ENCODE measurements at regions of chr9 and their contacts with region 1.

Region 1: DNA sequence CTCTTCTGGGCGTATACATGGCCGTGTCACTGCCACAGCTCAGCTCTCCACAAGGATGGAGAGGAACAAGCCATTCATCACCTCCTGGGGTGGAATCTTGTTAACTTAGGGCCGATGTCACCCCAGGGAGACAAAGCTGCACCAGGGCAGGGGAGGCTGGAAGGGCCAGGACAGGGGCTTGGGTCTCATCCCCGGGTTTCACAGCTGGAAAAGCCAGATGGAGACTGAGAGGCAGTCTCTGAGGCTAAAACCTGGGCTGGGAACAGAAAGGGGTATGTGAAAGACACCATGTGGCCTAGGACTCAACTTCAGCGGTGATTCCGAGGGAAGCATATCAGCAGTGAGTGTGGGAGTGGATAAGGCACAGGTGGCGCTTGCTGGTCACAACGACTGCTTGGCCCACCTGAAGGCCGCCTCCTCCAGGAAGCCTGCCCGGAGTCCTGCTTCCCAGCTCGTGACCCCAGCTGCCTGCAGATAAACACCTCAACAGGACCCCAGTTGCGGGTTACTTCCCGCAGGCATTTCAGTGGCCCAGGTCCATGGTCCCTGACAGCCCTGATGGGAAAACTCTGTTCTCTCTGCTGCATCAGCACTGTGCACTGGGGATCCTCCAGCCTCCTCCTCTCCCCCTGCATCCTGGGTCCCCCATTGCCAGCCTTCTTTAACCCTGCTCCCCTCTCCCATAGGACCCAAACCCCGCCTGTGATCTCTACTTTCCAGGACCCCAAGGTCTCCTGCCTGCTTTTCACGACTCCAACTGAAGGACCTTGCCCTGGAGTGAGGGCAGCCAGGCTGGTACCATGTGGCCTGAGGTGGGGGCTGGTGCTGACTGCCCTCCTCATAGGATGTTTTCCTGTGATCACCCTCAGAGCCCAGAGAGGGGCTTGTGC is 51.7 kb upstream of the FCN1 start:
- DNase-seq: no peak
- CTCF ChIP-seq: no peak

Region 2: GRCh38 chr9:134807716-134808444 is 161.5 kb before region 1 on chr9:
- in situ Hi-C with region 1: loop called (anchors 10 kb)
- DNase-seq: no peak
- CTCF ChIP-seq: no peak

Measured in GM13976 (cell line).